MCF 10A (cell line): ENCODE measurements at regions of chr16 and their contacts with region 1.

Region 1: DNA sequence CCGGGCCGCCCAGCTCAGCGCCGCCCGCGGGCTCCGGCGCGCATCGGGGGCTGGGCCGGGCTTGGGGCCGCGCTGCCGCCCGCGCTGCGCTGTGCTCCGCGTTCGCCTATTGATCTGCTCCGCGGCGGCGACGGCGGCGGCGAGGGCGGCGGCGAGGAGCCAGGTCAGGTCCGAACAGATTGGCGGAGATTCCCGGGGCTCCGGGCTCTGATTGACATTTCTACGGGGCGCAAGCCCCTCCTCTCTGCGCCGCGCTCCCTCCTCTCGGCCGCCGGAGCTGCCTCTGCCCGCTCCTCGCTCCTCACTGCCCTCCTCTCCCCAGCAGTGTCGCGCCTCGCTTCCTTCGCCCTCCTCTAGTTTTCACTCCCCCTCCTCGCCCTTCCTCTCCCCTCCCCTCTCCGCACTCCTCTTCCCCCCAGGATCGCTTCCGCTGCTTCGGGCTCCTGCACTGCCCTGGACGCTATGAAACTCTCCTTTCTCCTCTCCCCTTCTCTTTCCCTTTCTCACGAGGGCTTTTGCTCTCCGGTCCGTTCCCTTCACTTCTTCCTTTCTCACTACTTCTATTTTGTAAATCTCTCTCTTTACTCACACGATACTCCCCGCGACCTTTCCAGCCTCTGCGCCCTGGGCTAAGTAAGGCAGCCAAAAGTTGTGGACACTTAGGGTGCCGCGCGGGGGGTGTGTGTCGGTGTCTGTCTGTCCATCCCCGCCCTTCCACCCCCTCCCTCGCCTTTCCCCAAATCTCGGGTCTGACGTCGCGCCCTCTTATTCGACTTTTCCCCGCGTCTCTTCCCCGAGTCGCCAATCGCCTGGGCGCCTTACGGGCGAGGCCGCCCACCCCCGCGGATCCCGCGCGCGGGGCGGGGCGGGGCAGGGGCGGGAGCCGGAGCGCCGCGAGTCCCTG is at the start of gene IRX3:
- DNase-seq: peak; percentile 97
- H3K4me3 Mint-ChIP-seq: peak within 1 kb of the TSS; percentile 94
- H3K27ac Mint-ChIP-seq: peak within 1 kb of the TSS; percentile 95
- H3K4me1 Mint-ChIP-seq: peaks cover 4% of the 10 kb centered on the region
- H3K27me3 Mint-ChIP-seq: no peaks in the 10 kb centered on the region
- CTCF ChIP-seq: no peak
- total RNA-seq, gene IRX3: 15.7 and 17.6 TPM in 2 replicates

Region 2: DNA sequence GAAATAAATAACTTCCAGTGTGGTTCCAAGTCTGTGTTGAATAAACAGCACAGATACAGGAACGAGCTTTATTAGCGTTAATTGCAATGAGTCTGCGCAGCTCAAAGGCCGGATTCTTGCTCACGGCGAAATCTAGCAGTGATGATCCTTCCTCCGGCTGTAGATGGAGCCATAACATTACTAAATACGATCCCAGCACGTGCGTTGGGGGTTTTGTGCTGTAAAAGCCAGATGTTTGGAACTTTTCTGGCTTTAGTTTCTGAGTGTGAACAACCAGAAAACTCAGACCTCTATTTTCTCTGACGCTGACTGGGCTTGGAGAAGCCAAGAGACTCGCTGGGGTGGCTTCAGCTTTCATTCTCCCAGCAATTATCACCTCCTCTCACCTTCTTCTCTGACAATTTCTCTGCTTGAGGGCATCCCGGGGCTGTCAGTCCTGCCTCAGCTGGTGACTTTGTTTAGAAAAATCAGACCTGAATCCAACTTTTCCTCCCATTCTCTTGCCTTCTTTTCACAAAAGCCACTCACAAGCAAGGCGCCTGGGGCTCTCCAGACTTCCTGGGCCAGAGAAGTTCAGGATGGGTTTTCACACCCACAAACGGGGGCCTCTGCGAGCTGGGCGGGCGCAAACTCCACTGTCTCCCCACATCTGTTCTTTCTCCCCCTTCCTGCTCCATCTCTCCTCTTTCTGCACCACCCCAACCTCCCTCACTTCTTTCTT is 736.2 kb before region 1 on chr16:
- CTCF ChIA-PET with region 1: interaction called, 5 read pairs
- POLR2A ChIA-PET with region 1: interaction called, 4 read pairs
- intact Hi-C with region 1: loop called (anchors 2 kb)
- DNase-seq: peak; percentile 81
- H3K4me3 Mint-ChIP-seq: no peak overlapping the region
- H3K27ac Mint-ChIP-seq: no peak overlapping the region
- H3K4me1 Mint-ChIP-seq: peaks cover 6% of the 10 kb centered on the region
- H3K27me3 Mint-ChIP-seq: no peaks in the 10 kb centered on the region
- CTCF ChIP-seq: peak; percentile 69

Region 3: GRCh38 chr16:54080524-54081008 is 205.8 kb before region 1 on chr16:
- CTCF ChIA-PET with region 1: interaction called, 3 read pairs
- POLR2A ChIA-PET with region 1: interaction called, 11 read pairs
- intact Hi-C with region 1: loop called (anchors 5 kb)
- DNase-seq: peak; percentile 99
- H3K4me3 Mint-ChIP-seq: peak overlapping the region; percentile 54
- H3K27ac Mint-ChIP-seq: peak overlapping the region; percentile 99
- H3K4me1 Mint-ChIP-seq: peaks cover 41% of the 10 kb centered on the region
- H3K27me3 Mint-ChIP-seq: no peaks in the 10 kb centered on the region
- CTCF ChIP-seq: no peak

Region 4: GRCh38 chr16:54425681-54426552 is 139.6 kb after region 1 on chr16:
- CTCF ChIA-PET with region 1: interaction called, 3 read pairs
- POLR2A ChIA-PET with region 1: interaction called, 53 read pairs
- intact Hi-C with region 1: no loop called
- DNase-seq: no peak
- H3K4me3 Mint-ChIP-seq: peak overlapping the region; percentile 7
- H3K27ac Mint-ChIP-seq: no peak overlapping the region
- H3K4me1 Mint-ChIP-seq: peaks cover 45% of the 10 kb centered on the region
- H3K27me3 Mint-ChIP-seq: no peaks in the 10 kb centered on the region
- CTCF ChIP-seq: no peak

Region 5: DNA sequence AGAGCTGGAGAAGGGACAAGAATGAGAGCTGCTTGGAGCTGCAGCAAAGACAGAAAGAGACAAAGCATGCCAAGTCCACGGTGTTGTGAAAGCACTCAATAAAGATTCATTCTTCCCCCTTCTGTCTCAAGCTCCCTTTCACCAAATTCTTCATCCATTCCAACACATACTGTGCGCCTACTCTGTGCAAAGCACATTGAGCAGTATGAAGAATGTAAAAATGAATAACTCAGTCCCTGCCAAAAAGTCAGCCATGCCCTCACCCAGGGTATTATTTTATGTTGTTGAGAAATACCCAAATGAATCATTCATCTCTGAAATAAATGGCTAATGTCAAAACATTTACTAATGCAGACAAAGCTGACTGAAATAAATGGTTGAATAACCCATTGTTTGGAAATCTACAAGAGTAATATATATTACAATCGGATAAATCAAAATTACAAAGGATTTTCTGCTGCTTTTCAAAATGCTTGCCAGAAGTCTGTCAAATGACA is 361.4 kb after region 1 on chr16:
- CTCF ChIA-PET with region 1: interaction called, 4 read pairs
- POLR2A ChIA-PET with region 1: interaction called, 27 read pairs
- intact Hi-C with region 1: no loop called
- DNase-seq: peak; percentile 91
- H3K4me3 Mint-ChIP-seq: peak overlapping the region; percentile 67
- H3K27ac Mint-ChIP-seq: peak overlapping the region; percentile 94
- H3K4me1 Mint-ChIP-seq: peaks cover 42% of the 10 kb centered on the region
- H3K27me3 Mint-ChIP-seq: no peaks in the 10 kb centered on the region
- CTCF ChIP-seq: no peak

Region 6: GRCh38 chr16:54929090-54930004 is 643.0 kb after region 1 on chr16:
- CTCF ChIA-PET with region 1: interaction called, 7 read pairs
- POLR2A ChIA-PET with region 1: interaction called, 352 read pairs
- intact Hi-C with region 1: loop called (anchors 1 kb)
- DNase-seq: peak; percentile 99
- H3K4me3 Mint-ChIP-seq: peak overlapping the region; percentile 88
- H3K27ac Mint-ChIP-seq: peak overlapping the region; percentile 97
- H3K4me1 Mint-ChIP-seq: peaks cover 21% of the 10 kb centered on the region
- H3K27me3 Mint-ChIP-seq: no peaks in the 10 kb centered on the region
- CTCF ChIP-seq: peak; percentile 17